Prostate gland (tissue), 2 donors: ENCODE measurements at regions of chr1 and their contacts with region 1.

Region 1: DNA sequence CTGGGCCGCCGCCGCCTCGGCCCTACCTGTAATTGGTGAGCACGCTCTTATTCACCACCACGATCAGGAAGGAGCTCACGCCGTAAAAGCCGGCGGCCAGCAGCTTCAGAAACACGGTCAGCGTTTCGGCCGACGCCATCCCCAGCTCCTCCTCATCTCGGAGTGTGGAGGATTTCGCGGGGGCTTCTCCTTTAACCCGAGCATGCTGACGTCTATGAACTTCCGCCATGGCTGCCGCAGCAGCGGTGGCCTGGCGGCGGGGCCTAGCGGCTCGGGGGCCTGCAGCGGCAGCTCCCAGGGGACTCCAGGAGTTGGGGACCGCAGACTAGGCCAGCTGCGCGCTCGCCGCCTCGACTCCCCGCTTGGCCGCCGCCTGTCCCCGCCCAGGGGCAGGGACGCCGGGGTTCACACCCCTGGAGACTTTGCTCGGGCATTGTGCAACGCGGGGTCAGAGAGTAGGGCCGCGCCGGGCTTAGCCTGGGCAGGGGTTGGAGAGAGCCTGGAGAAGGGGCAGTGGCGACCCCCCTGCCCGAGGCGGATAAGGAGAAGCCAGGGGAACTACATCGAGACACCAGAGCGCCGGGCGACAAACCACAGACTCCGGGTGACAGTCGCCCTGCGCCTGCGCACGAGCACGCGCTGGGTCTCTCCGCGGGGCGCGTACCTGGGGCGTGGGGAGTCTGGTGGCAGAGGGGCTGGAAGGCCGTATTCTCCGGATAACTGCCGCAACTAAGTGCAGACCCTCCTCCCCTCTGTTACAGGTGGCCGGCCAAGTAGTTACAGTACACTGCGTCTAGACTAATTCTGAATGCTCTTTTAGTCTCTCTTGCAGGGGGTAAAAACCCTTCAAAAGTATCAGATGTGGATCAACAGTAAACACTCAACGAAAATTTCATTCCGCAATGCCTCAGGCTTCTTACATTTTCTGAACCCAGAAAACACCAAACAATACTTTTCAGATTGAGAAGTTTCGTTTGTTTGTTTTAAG is at the start of gene SLC35D1:
- DNase-seq: peak; percentile 64
- H3K4me3 ChIP-seq: peak within 1 kb of the TSS; percentile 57 to 89
- H3K27ac ChIP-seq: peak within 1 kb of the TSS; percentile 91 to 95
- H3K4me1 ChIP-seq: no peaks in the 10 kb centered on the region
- H3K27me3 ChIP-seq: no peaks in the 10 kb centered on the region
- CTCF ChIP-seq: no peak
- POLR2A ChIP-seq: no peak
- total RNA-seq, gene SLC35D1: 13.0 to 13.2 TPM

Region 2: GRCh38 chr1:66929999-66930822 is 123.9 kb before region 1 on chr1:
- intact Hi-C with region 1: loop called (anchors 5 kb)
- DNase-seq: peak; percentile 91
- H3K4me3 ChIP-seq: peak overlapping the region; percentile 74 to 89
- H3K27ac ChIP-seq: peak overlapping the region; percentile 97
- H3K4me1 ChIP-seq: no peaks in the 10 kb centered on the region
- H3K27me3 ChIP-seq: no peaks in the 10 kb centered on the region
- CTCF ChIP-seq: peak; percentile 33 to 73 (median 59)
- POLR2A ChIP-seq: peak; percentile 87

Region 3: DNA sequence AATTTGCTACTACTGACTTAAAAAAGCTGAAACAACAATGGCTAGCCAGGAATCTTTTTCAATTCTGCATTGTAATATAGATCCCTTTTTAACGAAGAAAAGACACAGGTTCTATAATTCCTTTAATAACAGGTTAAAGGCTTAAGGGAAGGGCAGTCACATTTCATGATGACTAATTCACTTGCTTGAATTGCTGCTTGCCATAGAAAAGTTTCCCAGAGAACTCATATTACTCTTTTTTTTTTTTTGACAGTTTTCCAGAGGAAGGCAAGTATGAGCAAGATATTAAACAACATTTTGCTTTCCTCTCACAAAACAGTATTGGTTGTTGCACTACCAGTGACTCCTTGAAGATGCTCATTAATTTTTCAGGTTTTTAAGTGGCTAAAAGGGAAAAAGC is 173.1 kb after region 1 on chr1:
- intact Hi-C with region 1: no loop called
- DNase-seq: no peak
- H3K4me3 ChIP-seq: no peak overlapping the region
- H3K27ac ChIP-seq: no peak overlapping the region
- H3K4me1 ChIP-seq: no peaks in the 10 kb centered on the region
- H3K27me3 ChIP-seq: peaks cover 3% of the 10 kb centered on the region
- CTCF ChIP-seq: no peak
- POLR2A ChIP-seq: no peak